Keratinocyte (primary cell): ENCODE measurements at regions of chr12 and their contacts with region 1.

Region 1: DNA sequence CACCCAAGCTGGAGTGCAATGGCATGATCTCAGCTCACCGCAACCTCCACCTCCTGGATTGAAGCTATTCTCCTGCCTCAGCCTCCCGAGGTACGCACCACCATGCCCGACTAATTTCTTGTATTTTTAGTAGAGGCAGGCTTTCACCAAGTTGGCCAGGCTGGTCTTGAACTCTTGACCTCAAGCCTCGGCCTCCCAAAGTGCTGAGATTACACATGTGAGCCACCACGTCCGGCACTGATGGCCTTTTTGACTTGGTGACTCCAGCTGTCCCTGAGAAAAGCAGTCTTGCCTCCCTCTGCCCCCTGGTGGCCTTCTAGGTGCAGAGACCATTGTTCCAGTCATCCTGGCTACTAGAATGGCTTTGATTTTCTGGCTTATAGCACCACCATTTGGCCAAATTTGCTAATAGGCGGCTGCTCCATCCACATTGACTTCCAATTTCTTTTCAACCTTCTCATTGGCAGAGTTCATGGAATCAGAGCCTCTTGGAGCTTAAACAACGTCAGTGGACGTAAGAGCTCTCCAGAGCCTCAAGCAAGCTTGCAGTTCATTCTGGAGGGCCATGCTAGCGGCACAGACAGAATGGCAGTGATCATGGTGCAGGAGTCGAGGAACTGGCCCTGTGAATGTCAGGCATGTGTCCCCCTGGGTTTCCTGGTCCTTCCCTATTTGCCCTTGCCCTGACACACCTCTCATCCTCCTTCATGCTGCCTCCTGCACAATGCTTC is 25.4 kb upstream of the EIF4B start:
- DNase-seq: peak; percentile 55
- H3K4me3 ChIP-seq: no peak overlapping the region
- H3K27ac ChIP-seq: no peak overlapping the region
- H3K4me1 ChIP-seq: no peaks in the 10 kb centered on the region
- H3K27me3 ChIP-seq: peaks cover 4% of the 10 kb centered on the region
- CTCF ChIP-seq: peak; percentile 92 to 99 (median 99)

Region 2: DNA sequence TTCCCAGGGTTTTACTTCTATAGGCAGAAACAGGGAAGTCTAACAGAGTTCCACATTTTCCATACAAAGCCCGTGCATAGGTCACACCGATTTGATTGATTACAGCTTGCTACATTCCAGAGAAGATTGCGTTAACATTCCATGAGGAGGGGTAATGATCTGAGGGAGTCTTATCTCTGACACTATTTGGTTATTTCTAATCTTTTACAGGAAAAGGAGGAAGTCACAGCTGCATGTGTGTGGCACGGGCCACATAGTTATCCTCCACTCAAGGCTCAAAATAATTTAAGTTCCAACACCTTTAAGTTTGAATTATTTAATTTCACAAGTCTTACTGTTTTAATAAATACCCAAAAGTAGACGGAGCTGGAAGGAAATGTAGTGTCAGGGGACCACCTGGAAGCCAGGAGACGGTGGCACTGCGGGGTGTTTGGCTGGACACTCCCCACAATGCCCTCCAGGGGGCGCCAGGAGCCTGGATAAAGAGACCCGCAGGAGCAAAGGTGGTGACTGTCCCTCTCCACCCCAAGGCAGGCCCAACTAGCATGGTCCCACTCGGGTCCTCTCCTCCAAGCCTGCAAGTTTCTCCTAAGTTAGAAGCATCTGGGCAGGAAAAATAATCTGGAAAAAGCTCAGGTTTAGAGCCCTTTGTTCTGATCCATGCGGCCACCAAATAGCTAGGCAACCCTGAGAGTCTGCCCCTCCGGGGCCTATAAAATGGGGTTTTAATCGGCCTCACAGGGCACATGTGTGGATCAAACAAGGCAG is 96.1 kb before region 1 on chr12:
- dilution Hi-C with region 1: loop called (anchors 5 kb)
- DNase-seq: no peak
- H3K4me3 ChIP-seq: no peak overlapping the region
- H3K27ac ChIP-seq: no peak overlapping the region
- H3K4me1 ChIP-seq: no peaks in the 10 kb centered on the region
- H3K27me3 ChIP-seq: no peaks in the 10 kb centered on the region
- CTCF ChIP-seq: peak; percentile 86 to 92 (median 86)